Calu3 (cell line): ENCODE measurements at regions of chr11 and their contacts with region 1.

Region 1: GRCh38 chr11:61747192-61747966 is 5.1 kb upstream of the MYRF start:
- DNase-seq: peak; percentile 91
- H3K4me3 Mint-ChIP-seq: no peak overlapping the region
- H3K27ac Mint-ChIP-seq: no peak overlapping the region
- H3K4me1 Mint-ChIP-seq: peaks cover 16% of the 10 kb centered on the region
- H3K27me3 Mint-ChIP-seq: no peaks in the 10 kb centered on the region
- CTCF ChIP-seq: peak; percentile 90

Region 2: GRCh38 chr11:61776551-61777075 is 29.2 kb after region 1 on chr11:
- CTCF ChIA-PET with region 1: interaction called, 8 read pairs
- intact Hi-C with region 1: loop called (anchors 2 kb)
- DNase-seq: peak; percentile 84
- H3K4me3 Mint-ChIP-seq: no peak overlapping the region
- H3K27ac Mint-ChIP-seq: no peak overlapping the region
- H3K4me1 Mint-ChIP-seq: no peaks in the 10 kb centered on the region
- H3K27me3 Mint-ChIP-seq: no peaks in the 10 kb centered on the region
- CTCF ChIP-seq: peak; percentile 76